Activated CD4-positive, alpha-beta memory T cell treated with anti-CD3 and anti-CD28 coated beads for 36 hours (primary cell): ENCODE measurements at regions of chr14 and their contacts with region 1.

Region 1: DNA sequence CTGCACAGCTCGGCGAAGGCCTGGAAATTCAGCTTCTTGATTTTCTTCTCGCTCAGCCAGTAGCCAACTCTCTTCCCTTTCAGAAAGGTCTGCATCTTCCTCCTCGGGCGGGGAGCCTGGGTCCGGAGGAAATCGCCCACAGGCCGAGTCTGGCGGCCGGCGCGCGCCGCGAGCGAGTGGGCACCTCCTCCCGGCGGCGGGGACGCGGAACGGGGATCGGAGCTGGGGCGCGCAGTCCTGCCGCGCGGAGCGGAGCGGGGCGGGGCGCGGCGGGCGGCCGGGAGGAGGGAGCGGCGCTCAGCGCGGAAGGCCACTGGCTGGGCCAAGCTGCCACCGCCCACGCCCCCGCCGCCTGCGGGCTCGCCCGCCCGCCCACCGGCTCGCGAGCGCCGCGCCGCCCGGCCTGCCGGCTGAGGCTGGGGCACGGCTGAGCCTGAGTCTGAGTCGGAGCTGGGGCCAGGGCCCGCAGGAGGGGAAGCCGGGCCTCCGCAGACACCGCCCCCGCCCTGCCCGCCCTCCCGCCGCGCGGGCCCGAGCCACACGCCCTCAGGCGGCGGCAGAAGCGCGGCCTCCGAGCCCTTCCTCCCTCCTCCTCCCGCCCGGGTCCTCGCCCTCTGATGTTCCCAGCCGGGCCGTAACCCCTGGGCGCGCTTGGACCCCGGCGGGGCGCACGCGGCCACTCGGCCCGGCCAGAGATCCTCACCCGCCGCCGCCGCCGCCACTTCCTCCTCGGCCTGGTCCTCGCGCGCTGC is 480 bp downstream of the ITPK1 start:
- DNase-seq: peak; percentile 87
- H3K4me3 Mint-ChIP-seq: peak overlapping the region; percentile 83
- H3K27ac Mint-ChIP-seq: no peak overlapping the region
- H3K4me1 Mint-ChIP-seq: peaks cover 24% of the 10 kb centered on the region
- H3K27me3 Mint-ChIP-seq: no peaks in the 10 kb centered on the region

Region 2: DNA sequence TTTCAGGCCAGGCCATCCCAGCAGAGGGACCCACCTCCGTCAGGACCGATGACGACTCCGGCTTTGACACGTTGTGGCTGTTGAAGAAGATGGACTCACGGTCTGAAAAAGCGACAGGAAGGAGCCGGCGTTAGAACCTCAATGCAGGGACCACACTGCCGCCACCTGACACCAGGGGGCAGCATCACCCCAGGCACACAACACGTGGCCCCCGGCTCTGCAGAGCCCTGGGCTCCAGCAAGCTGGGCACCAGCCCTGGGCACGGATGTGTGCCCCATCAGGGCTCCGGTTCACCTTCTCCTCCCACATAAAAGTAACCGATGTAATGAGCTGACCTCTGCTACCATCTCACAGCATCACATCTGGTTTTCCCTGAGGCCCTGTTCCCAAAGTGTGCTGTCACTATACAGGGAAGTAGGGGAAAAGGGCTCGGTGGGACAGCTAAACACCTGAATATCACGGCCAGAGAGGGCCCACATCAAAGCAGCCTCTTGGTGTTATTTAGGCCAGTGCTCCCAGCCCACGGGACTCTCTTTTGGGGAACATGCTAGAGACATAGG is 163.3 kb before region 1 on chr14:
- CTCF ChIA-PET with region 1: interaction called, 11 read pairs
- POLR2A ChIA-PET with region 1: no interaction called
- intact Hi-C with region 1: loop called (anchors 5 kb)
- DNase-seq: peak; percentile 88
- H3K4me3 Mint-ChIP-seq: no peak overlapping the region
- H3K27ac Mint-ChIP-seq: no peak overlapping the region
- H3K4me1 Mint-ChIP-seq: peaks cover 4% of the 10 kb centered on the region
- H3K27me3 Mint-ChIP-seq: no peaks in the 10 kb centered on the region

Region 3: GRCh38 chr14:93103392-93104080 is 11.7 kb before region 1 on chr14:
- CTCF ChIA-PET with region 1: interaction called, 54 read pairs
- POLR2A ChIA-PET with region 1: no interaction called
- intact Hi-C with region 1: loop called (anchors 1 kb)
- DNase-seq: peak; percentile 84
- H3K4me3 Mint-ChIP-seq: peak overlapping the region; percentile 63
- H3K27ac Mint-ChIP-seq: peak overlapping the region; percentile 91
- H3K4me1 Mint-ChIP-seq: peaks cover 20% of the 10 kb centered on the region
- H3K27me3 Mint-ChIP-seq: no peaks in the 10 kb centered on the region

Region 4: DNA sequence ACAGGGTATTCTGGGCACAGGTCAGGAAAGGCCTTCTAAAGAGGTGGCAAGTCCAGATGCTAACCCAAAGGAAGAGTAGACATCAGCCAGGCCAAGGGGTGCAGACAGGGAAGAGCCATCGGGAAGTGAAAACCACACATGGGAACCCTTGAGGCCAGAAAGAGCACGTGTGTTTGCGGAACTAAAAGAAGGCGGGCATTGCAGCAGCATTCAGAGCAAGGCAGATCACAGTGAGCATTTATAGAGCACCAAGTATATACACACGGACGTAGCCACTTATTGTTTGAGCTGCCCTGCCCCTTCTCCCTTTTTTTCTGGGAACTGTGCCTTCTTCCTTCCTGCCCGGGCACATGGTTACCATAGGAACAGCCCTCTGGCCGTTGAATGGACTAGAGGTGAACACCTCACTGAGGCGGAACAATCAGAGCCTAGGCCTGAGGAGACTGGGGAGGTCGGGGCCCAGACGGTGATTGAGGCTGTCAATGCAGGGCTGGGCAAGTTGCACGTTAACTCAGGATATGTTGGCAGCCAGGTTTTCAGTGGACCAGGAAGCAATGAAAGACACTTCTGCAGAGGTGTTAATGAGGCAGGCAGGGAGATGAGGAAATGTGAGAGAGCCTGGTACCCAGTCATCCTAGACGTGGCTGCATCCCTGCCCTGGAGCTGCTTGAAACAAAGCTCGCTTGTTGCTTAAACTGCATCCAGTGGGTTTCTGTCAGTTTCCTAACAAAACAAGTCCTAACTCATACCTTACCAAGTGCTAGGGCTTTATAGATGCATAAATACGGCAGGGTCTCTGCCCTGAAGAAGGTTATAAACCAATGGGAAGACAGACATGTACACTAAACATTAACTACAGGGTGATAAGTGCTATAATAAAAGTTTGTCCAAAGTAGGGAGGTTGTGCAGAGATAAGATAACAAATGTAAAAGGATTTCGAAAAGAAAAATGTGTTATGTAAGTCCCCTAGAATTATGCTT is 35.3 kb after region 1 on chr14:
- CTCF ChIA-PET with region 1: interaction called, 16 read pairs
- POLR2A ChIA-PET with region 1: no interaction called
- intact Hi-C with region 1: loop called (anchors 5 kb)
- DNase-seq: no peak
- H3K4me3 Mint-ChIP-seq: no peak overlapping the region
- H3K27ac Mint-ChIP-seq: no peak overlapping the region
- H3K4me1 Mint-ChIP-seq: peaks cover 8% of the 10 kb centered on the region
- H3K27me3 Mint-ChIP-seq: peaks cover 3% of the 10 kb centered on the region

Region 5: DNA sequence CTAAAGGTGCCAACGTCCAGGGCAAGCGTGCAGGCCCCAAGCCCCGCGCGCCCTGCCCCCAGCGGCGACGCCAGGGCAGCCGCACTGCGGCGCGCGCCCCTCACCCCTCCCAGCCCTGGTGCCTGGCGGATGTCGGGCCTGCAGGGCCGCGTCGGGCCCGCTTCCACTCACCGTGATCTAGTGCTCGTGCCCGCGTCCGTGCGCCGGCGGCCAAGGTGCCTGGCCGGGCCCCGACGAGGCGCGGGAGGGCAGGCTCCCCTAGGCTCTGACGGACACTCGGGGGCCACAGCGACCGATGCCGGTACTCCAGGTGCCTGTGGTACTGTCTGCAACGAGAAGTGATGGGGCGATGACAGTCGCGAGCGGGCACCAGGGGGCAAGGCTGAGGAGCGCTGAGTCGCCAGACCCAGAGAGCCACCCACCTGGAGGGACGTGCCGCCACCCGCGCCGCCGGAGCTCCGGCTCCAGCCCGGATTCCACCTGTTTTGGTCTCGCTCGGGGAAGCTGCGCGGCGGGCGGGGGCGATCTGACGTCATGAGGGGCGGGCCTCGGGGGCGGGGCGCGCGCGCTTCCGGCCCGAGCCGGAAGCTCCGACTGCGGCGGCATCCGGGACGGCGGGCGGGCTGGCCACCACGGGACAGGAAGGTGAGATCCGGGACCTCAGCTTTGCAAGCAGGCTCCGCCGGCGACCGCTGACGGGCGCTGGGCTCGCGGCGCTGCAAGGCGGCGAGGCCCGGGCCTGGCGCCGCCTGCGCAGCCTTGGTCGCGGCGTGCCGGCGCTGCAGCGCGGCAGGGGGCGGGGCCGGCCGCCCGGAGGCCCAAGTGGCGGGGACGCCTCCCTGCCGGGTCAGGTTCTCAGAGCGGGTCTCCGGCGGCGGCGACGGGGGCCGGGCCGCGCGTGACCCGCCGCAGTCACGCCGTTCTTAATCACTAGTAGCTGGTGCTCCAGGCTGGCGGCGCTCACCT is 69.4 kb after region 1 on chr14 and contains the starts of genes LYSET and MOAP1:
- CTCF ChIA-PET with region 1: interaction called, 38 read pairs
- POLR2A ChIA-PET with region 1: interaction called, 17 read pairs
- intact Hi-C with region 1: loop called (anchors 1 kb)
- DNase-seq: peak; percentile 94
- H3K4me3 Mint-ChIP-seq: peak within 1 kb of the TSS; percentile 93
- H3K27ac Mint-ChIP-seq: peak within 1 kb of the TSS; percentile 92
- H3K4me1 Mint-ChIP-seq: peaks cover 47% of the 10 kb centered on the region
- H3K27me3 Mint-ChIP-seq: no peaks in the 10 kb centered on the region
- total RNA-seq, gene LYSET: 12.0 to 12.4 TPM
- total RNA-seq, gene MOAP1: 14.2 to 14.8 TPM

Region 6: DNA sequence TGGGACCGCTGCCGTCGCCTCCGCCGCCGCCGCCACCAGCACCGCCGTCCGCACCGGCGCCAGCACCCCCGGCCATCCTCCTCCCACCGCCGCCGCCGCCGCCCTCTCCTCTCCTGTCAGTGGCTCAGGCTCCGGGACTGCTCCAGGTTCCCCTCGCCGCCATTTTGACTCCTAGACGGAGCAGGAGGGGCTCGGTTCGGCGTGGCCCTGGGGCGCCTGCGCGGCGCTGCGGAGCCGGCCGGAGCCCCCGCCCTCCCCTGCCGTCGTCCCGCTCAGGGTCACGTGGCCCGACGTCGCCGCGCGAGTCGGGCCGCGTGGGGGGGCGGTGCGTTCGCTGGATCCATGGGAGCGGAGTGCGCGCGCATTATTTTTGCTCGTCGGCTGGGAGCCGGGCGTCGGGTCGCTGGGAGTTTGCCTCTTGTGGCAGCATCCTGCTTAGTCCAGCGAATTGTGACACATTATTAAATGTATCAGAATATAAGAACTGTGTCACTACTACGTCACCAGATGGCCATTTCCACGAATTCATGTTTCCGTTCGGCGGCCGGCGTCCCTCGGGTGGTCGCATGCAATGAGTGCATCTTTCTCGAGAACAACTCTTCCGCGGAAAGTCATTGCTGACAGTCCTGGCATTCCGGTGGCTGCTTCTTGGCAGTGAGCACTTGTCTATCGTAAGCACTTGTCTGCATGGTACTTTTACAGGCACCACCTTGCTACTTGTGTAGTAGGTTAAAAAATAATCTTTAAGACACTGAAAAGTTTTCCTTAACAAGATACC is 217.8 kb after region 1 on chr14 and contains the start of gene BTBD7:
- CTCF ChIA-PET with region 1: interaction called, 3 read pairs
- POLR2A ChIA-PET with region 1: no interaction called
- intact Hi-C with region 1: loop called (anchors 5 kb)
- DNase-seq: peak; percentile 96
- H3K4me3 Mint-ChIP-seq: peak within 1 kb of the TSS; percentile 83
- H3K27ac Mint-ChIP-seq: peak within 1 kb of the TSS; percentile 83
- H3K4me1 Mint-ChIP-seq: peaks cover 43% of the 10 kb centered on the region
- H3K27me3 Mint-ChIP-seq: no peaks in the 10 kb centered on the region
- total RNA-seq, gene BTBD7: 7.7 to 9.9 TPM